ENCODE measurements at regions of chr11 and their contacts with region 1.

Region 1: GRCh38 chr11:58513747-58514367 is 6.0 kb upstream of the OR5B21 start:
- DNase-seq: peak; percentile 22
- CTCF ChIP-seq: peak; percentile 68

Region 2: GRCh38 chr11:58524232-58525036 is 10.6 kb after region 1 on chr11:
- CTCF ChIA-PET with region 1: interaction called, 14 read pairs
- POLR2A ChIA-PET with region 1: no interaction called
- DNase-seq: peak; percentile 24
- CTCF ChIP-seq: peak; percentile 67